ENCODE measurements at regions of chr1 and their contacts with region 1.

Region 1: GRCh38 chr1:32817159-32817814 is at the starts of genes S100PBP and YARS1:
- DNase-seq: peak; percentile 99
- H3K4me3 ChIP-seq: peak within 1 kb of the TSS; percentile 89
- H3K27ac ChIP-seq: peak within 1 kb of the TSS; percentile 94
- H3K4me1 ChIP-seq: peaks cover 21% of the 10 kb centered on the region
- H3K27me3 ChIP-seq: no peaks in the 10 kb centered on the region
- CTCF ChIP-seq: no peak
- total RNA-seq, gene S100PBP: 66.1 and 69.3 TPM in 2 replicates
- total RNA-seq, gene YARS1: 262 and 299 TPM in 2 replicates

Region 2: GRCh38 chr1:31444725-31445448 is 1372.4 kb before region 1 on chr1:
- CTCF ChIA-PET with region 1: no interaction called
- POLR2A ChIA-PET with region 1: no interaction called
- intact Hi-C with region 1: no loop called
- DNase-seq: no peak
- H3K4me3 ChIP-seq: no peak overlapping the region
- H3K27ac ChIP-seq: no peak overlapping the region
- H3K4me1 ChIP-seq: no peaks in the 10 kb centered on the region
- H3K27me3 ChIP-seq: peaks cover 5% of the 10 kb centered on the region
- CTCF ChIP-seq: no peak

Region 3: GRCh38 chr1:32753532-32754312 is 63.6 kb before region 1 on chr1:
- CTCF ChIA-PET with region 1: no interaction called
- POLR2A ChIA-PET with region 1: no interaction called
- intact Hi-C with region 1: no loop called
- DNase-seq: peak; percentile 83
- H3K4me3 ChIP-seq: peak overlapping the region; percentile 59
- H3K27ac ChIP-seq: no peak overlapping the region
- H3K4me1 ChIP-seq: peaks cover 4% of the 10 kb centered on the region
- H3K27me3 ChIP-seq: no peaks in the 10 kb centered on the region
- CTCF ChIP-seq: no peak

Region 4: GRCh38 chr1:32848354-32849063 is 31.2 kb after region 1 on chr1:
- CTCF ChIA-PET with region 1: no interaction called
- POLR2A ChIA-PET with region 1: interaction called, 20 read pairs
- intact Hi-C with region 1: no loop called
- DNase-seq: no peak
- H3K4me3 ChIP-seq: no peak overlapping the region
- H3K27ac ChIP-seq: no peak overlapping the region
- H3K4me1 ChIP-seq: no peaks in the 10 kb centered on the region
- H3K27me3 ChIP-seq: no peaks in the 10 kb centered on the region
- CTCF ChIP-seq: no peak